GM10248 (cell line): ENCODE measurements at regions of chr12 and their contacts with region 1.

Region 1: GRCh38 chr12:98998697-98999299 is 353.7 kb downstream of the APAF1 start:
- DNase-seq: peak; percentile 57
- CTCF ChIP-seq: peak; percentile 63

Region 2: DNA sequence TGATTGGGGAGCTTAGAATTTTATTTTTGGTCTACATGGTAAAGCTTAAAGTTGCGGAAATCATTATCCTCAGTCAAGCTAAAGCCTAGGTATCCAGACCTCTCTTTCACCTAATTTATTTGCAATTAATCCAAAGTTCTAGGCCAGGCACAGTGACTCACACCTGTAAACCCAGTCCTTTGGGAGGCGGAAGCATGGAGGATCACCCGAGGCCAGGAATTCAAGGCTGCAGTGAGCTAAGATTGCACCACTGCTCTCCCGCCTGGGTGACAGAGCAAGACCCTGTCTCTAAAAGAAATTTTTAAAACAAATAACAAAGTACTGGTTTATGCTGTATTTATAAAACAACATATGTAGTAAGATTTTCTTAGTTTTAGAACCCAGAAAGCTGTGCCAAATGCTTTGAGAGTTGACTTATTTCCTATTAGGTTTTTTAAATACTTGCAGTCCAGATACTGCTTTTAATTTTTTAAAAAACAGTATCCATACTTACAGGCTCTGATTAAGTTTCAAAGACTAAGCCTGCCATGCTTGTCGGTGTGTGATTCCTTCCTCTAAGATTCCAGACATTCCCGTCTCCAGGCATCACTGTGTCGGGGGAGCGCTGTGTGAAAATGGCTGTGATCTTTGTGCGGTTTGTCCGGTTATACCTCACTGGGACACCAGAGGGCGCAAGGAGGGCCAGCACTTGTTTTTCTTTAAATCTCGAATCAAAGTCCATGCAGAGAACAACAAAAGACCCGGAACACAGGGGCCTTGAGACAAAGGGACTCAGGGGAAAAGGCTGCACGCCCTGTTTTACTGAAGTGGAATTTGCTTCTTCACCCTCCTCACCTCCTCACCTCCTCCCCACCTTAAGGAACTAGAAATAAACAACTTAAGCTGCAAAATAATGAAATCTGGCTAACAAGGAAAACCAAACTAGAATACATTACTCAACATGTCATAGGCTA is 508.0 kb before region 1 on chr12:
- CTCF ChIA-PET with region 1: interaction called, 10 read pairs
- POLR2A ChIA-PET with region 1: no interaction called
- DNase-seq: peak; percentile 70
- CTCF ChIP-seq: peak; percentile 88

Region 3: GRCh38 chr12:98725476-98726247 is 273.1 kb before region 1 on chr12:
- CTCF ChIA-PET with region 1: interaction called, 17 read pairs
- POLR2A ChIA-PET with region 1: no interaction called
- DNase-seq: peak; percentile 48
- CTCF ChIP-seq: peak; percentile 65

Region 4: GRCh38 chr12:98780261-98780660 is 218.5 kb before region 1 on chr12:
- CTCF ChIA-PET with region 1: no interaction called
- POLR2A ChIA-PET with region 1: no interaction called
- DNase-seq: no peak
- CTCF ChIP-seq: no peak

Region 5: DNA sequence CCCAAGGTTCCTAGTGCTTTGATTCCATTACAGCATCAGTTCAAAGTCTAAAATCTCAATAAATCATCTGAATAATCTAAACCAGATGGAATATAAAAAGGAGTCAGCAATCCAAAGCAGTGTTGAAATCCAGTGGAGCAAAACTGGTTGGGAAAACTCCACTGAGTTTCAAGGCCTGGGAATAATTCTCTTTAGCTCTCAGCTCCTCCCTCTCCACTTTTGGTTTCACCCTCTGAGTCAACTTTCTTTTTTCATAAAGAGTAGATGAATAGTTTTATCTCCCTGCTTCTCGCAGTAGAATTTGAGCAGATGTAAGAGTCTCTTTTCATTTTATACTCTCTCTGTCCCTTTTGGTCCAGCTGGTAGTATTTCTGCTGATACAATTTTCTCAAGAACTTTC is 15.2 kb before region 1 on chr12:
- CTCF ChIA-PET with region 1: interaction called, 15 read pairs
- POLR2A ChIA-PET with region 1: no interaction called
- DNase-seq: peak; percentile 26
- CTCF ChIP-seq: no peak

Region 6: DNA sequence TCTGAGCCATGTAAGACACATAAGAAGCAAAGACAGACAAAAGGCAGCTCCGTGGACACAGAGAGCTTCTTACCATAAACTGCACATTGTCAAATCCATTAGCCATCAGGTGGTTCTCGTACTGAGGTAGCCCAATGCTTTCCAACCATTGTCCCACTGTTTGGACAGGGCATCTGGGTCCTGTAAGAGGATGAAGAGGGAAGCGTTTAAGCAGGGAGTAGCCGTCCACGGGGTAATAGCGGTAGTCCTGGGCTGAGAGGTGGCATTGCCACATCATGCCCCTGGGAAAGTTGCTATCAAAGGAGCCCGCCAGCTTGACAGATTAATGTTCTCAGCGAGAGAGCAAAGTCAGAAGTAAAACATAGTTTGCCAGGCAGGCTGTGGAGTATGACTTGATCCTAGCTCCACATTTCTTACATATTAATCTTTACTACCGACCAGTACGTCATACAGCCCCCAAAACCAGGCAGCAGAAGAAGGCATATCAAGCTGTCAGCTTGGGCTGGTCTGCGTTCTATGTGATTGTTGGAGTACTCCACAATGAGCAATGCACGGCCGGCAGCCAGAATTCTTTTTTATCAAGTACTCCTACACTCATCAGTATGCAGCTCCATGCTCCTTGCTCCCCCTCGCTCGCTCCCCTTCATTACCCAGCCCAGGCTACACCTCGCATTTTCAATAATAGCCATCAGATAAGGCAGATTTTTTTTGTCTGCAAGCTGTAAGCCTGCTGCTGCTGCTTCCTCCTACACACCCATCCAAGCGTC is 155.6 kb after region 1 on chr12:
- CTCF ChIA-PET with region 1: no interaction called
- POLR2A ChIA-PET with region 1: no interaction called
- DNase-seq: no peak
- CTCF ChIP-seq: no peak

Region 7: GRCh38 chr12:99223579-99223978 is 224.8 kb after region 1 on chr12:
- CTCF ChIA-PET with region 1: no interaction called
- POLR2A ChIA-PET with region 1: no interaction called
- DNase-seq: no peak
- CTCF ChIP-seq: no peak